Activated CD8-positive, alpha-beta T cell treated with anti-CD3 and anti-CD28 coated beads for 36 hours (primary cell): ENCODE measurements at regions of chr14 and their contacts with region 1.

Region 1: DNA sequence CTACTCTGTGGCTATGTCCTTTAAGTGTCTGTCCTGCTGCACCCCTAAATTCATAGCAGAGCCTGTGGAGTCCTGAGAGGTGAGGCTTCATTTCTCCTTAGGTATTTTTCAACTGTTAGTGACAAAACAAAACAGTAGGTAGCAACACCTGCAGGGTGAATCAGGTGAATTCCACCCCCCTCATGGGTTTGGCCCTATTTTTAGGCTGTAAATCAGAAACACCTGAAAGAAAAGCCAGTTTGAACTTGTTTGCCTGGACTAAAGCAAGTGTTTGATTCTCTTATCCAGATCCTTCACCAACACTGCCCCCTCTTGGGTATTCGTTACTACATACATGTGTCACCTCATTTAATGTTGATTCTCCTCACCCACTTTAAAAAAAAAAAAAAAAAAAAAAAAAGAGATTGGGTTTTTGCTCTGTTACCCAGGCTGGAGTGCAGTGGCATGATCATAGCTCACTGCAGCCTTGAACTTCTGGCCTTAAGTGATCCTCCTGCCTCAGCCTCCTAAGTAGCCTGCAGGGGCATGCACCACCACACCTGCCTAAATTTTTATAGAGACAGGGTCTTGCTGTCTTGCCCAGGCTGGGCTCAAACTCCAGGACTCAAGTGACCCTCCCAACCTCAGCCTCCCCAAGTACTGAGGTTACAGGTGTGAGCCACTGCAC is 10.3 kb downstream of the TBPL2 start:
- DNase-seq: peak; percentile 65
- ATAC-seq: peak; percentile 92
- H3K4me3 Mint-ChIP-seq: no peak overlapping the region
- H3K27ac Mint-ChIP-seq: peak overlapping the region; percentile 51
- H3K4me1 Mint-ChIP-seq: peaks cover 23% of the 10 kb centered on the region
- H3K27me3 Mint-ChIP-seq: no peaks in the 10 kb centered on the region
- CTCF ChIP-seq: peak; percentile 76

Region 2: DNA sequence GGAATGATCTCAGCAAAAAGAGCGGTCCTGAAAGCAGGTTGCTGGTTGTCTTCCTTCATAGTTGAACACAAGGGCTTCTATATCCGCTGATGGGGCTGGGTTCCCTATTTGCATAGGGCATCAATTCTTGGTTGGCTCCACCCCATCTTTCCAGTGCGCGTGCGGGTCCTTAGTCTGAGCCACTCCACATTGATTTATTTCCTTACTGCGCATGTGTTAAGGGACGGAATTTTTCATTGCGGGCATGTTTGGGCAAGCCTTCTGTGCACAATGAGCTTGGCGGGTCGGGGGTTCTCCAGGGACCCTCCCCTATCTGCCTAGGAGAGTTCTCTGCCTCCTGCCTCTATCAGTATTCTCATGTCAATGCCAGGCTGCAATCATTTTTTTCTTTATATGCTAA is 217.5 kb before region 1 on chr14:
- CTCF ChIA-PET with region 1: interaction called, 7 read pairs
- POLR2A ChIA-PET with region 1: no interaction called
- intact Hi-C with region 1: loop called (anchors 2 kb)
- DNase-seq: no peak
- ATAC-seq: no peak
- H3K4me3 Mint-ChIP-seq: no peak overlapping the region
- H3K27ac Mint-ChIP-seq: no peak overlapping the region
- H3K4me1 Mint-ChIP-seq: peaks cover 2% of the 10 kb centered on the region
- H3K27me3 Mint-ChIP-seq: no peaks in the 10 kb centered on the region
- CTCF ChIP-seq: no peak

Region 3: GRCh38 chr14:55245657-55246268 is 184.4 kb before region 1 on chr14:
- CTCF ChIA-PET with region 1: interaction called, 24 read pairs
- POLR2A ChIA-PET with region 1: no interaction called
- intact Hi-C with region 1: no loop called
- DNase-seq: peak; percentile 47
- ATAC-seq: peak; percentile 34
- H3K4me3 Mint-ChIP-seq: no peak overlapping the region
- H3K27ac Mint-ChIP-seq: no peak overlapping the region
- H3K4me1 Mint-ChIP-seq: no peaks in the 10 kb centered on the region
- H3K27me3 Mint-ChIP-seq: peaks cover 9% of the 10 kb centered on the region
- CTCF ChIP-seq: peak; percentile 64

Region 4: GRCh38 chr14:55416866-55417265 is 13.3 kb before region 1 on chr14:
- CTCF ChIA-PET with region 1: interaction called, 35 read pairs
- POLR2A ChIA-PET with region 1: interaction called, 3 read pairs
- intact Hi-C with region 1: no loop called
- DNase-seq: peak; percentile 57
- ATAC-seq: peak; percentile 71
- H3K4me3 Mint-ChIP-seq: no peak overlapping the region
- H3K27ac Mint-ChIP-seq: no peak overlapping the region
- H3K4me1 Mint-ChIP-seq: peaks cover 14% of the 10 kb centered on the region
- H3K27me3 Mint-ChIP-seq: peaks cover 2% of the 10 kb centered on the region
- CTCF ChIP-seq: peak; percentile 58